ENCODE measurements at regions of chr19 and their contacts with region 1.

Region 1: GRCh38 chr19:44212250-44212865 is at the start of gene ZNF227:
- DNase-seq: peak; percentile 86
- H3K4me3 Mint-ChIP-seq: peak within 1 kb of the TSS; percentile 86
- H3K27ac Mint-ChIP-seq: peak within 1 kb of the TSS; percentile 24
- H3K4me1 Mint-ChIP-seq: peaks cover 8% of the 10 kb centered on the region
- H3K27me3 Mint-ChIP-seq: no peaks in the 10 kb centered on the region
- CTCF ChIP-seq: no peak
- total RNA-seq, gene ZNF227: 27.4 and 29.4 TPM in 2 replicates

Region 2: GRCh38 chr19:43872547-43873336 is 339.6 kb before region 1 on chr19:
- CTCF ChIA-PET with region 1: interaction called, 10 read pairs
- intact Hi-C with region 1: no loop called
- DNase-seq: no peak
- H3K4me3 Mint-ChIP-seq: no peak overlapping the region
- H3K27ac Mint-ChIP-seq: no peak overlapping the region
- H3K4me1 Mint-ChIP-seq: no peaks in the 10 kb centered on the region
- H3K27me3 Mint-ChIP-seq: no peaks in the 10 kb centered on the region
- CTCF ChIP-seq: no peak

Region 3: DNA sequence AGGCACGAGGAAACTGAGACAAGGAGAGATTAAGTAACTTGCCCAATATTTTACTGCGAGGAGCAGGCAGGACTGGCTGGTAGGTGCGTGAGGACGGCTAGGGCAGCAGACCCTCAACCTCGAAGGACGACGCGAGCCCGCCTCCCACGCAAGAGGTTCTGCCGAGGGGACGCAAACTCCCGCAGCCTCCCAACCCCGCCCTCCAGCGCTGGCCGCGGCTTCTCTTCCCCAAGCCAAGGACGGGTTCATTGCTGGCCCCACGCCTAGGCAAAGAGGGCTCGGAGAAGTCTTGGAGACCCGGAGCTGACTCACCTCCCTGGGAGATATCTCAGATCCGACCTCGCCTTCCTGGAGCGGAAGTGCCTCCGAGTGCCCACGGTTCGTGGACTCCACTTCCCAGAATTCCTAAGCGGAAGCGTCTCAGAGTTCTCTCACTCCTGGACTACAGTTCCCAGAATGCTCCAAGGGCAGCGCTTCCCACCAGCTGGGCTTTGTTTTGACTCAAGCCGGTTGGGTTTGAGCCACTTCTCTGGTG is 92.4 kb after region 1 on chr19 and contains the start of gene ZNF235:
- CTCF ChIA-PET with region 1: interaction called, 3 read pairs
- intact Hi-C with region 1: loop called (anchors 2 kb)
- DNase-seq: peak; percentile 92
- H3K4me3 Mint-ChIP-seq: peak within 1 kb of the TSS; percentile 88
- H3K27ac Mint-ChIP-seq: peak within 1 kb of the TSS; percentile 84
- H3K4me1 Mint-ChIP-seq: no peaks in the 10 kb centered on the region
- H3K27me3 Mint-ChIP-seq: no peaks in the 10 kb centered on the region
- CTCF ChIP-seq: no peak
- total RNA-seq, gene ZNF235: 8.1 and 8.5 TPM in 2 replicates